Ascending aorta (tissue), 2 donors: ENCODE measurements at regions of chr5 and their contacts with region 1.

Region 1: DNA sequence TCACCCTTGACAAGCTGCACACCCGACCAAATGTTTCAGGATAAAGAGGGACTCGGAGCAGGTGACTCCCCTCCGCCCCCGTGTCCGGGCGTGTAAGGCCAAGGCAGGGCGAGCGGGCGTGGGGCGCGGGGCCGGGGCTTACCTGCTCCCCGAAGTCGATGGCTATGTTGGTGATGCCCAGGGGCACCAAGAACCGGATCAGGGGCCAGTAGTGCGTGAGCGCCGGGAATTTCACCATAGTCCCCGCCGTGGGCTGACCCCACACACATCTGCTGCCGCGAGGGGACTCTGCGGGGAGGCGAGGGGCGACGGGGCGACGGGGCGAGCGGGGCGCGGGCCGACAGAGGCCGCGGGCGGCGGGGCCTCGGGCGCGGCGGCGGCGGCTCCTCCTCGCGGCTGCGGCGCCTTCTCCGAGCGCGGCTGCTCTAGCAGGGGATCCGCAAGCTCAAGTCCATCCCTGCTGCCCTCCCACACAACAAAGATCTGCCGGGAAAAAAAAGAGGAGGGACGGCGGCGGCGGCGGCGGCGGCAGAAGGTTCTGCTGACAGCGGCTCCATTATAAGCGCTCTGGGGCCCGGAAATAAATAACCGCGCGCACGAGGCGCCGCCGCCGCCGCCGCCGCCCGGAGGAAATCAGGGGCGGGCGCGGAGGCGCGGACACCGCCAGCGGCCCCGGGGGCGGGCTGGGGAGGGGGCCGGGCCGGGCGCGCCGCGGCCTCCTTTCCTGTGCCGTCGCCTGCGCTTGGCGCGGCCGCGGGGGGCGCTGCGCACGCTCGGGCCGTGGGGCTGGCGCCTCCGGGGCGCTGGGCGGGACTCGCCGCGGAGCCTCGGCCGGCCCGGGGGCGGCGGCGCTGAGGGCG is at the start of gene ANKH:
- DNase-seq: peak in 1 of 2 donors; percentile 92
- H3K4me3 ChIP-seq: peak within 1 kb of the TSS; percentile 80 to 98
- H3K27ac ChIP-seq: peak within 1 kb of the TSS; percentile 94 to 100
- H3K4me1 ChIP-seq: no peaks in the 10 kb centered on the region
- H3K27me3 ChIP-seq: no peaks in the 10 kb centered on the region
- CTCF ChIP-seq: peak in 2 of 3 experiments; percentile 2 to 35
- total RNA-seq, gene ANKH: 388 TPM

Region 2: DNA sequence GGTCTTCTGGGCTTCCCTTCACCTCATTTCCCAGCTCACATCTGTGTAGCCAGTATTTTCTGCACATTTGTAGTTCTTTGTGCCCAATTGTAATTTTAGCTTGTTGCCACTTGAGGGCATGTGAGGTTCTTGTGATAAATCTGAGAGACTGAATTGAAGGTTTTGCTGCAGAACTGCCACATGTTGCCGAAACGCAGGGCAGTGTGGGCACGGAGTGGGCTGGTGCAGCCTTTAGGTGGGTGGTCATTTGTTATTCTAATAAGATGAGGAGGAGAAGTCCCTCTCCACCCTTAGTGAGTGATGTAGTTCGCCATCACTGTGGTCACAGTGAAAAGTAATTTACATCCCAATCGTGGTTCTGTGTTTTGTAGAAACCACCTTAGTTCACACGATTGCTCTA is 185.7 kb before region 1 on chr5:
- intact Hi-C with region 1: loop called (anchors 5 kb)
- DNase-seq: no peak
- H3K4me3 ChIP-seq: no peak overlapping the region
- H3K27ac ChIP-seq: no peak overlapping the region
- H3K4me1 ChIP-seq: peaks cover 0 to 28% of the 10 kb centered on the region in 2 donors
- H3K27me3 ChIP-seq: no peaks in the 10 kb centered on the region
- CTCF ChIP-seq: peak; percentile 69 to 79 (median 72)

Region 3: DNA sequence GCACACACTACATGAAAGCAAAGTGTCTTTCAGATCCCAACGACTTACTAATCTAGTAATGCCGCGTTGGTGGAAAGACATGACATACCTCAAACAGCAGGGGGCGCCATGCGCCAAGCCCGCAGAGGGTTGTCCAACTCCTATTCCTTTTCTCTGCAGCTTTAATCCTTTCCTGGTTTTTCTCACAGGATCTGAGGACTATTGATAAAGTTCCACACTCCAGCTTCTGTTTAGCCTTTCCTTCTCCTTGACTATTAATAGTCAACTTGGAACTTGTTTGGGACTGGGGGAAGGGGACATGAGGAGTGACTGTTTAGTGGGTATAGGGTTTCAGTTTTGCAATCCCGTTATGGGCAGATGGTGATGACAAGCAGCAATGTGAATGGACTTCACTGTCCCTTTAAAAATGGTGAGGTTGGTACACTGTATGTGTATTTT is 144.0 kb before region 1 on chr5:
- intact Hi-C with region 1: loop called (anchors 1 kb)
- DNase-seq: peak in 1 of 2 donors; percentile 88
- H3K4me3 ChIP-seq: no peak overlapping the region
- H3K27ac ChIP-seq: peak overlapping the region in 1 of 2 donors; percentile 58
- H3K4me1 ChIP-seq: peaks cover 2 to 16% of the 10 kb centered on the region in 2 donors
- H3K27me3 ChIP-seq: no peaks in the 10 kb centered on the region
- CTCF ChIP-seq: peak; percentile 91 to 93 (median 92)

Region 4: GRCh38 chr5:14743601-14744295 is 127.7 kb before region 1 on chr5:
- intact Hi-C with region 1: loop called (anchors 5 kb)
- DNase-seq: no peak
- H3K4me3 ChIP-seq: no peak overlapping the region
- H3K27ac ChIP-seq: peak overlapping the region; percentile 67 to 77
- H3K4me1 ChIP-seq: peaks cover 11 to 38% of the 10 kb centered on the region in 2 donors
- H3K27me3 ChIP-seq: no peaks in the 10 kb centered on the region
- CTCF ChIP-seq: no peak

Region 5: DNA sequence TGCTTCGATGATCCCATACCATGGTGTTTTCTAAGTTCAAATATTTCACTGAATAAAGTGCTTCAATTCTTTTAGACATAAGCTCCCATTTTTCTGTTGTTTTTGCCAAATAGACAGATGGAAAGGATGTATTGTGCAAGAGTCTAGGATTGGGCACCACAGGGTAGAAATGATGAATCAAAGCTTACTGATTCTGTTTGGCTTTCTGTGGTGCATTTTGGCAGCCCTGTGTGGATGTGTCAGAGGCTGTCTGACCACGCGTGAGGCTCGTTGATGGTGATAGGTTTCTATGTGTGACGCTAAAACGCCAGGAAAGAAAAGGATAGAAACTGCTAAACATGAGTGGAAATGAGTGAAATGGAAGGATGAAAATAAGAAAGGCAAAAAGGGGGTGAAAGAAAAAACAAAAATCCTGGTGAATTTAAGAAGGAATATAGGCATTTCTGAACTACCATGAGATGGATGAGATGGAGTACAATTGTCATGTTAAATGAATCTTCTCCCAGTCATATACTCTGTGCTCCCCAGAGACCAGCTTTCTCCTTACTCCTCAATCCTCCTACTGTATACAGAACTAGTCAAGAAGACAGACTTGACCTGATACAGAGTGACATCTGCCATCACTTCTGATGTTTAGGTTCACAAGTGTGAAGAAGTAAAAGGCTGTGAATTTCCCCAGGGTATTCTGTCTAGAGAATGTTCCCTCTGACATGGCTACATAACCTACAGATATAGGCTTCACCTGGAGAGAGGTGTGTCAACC is 54.3 kb before region 1 on chr5:
- intact Hi-C with region 1: loop called (anchors 2 kb)
- DNase-seq: peak; percentile 31 to 88
- H3K4me3 ChIP-seq: peak overlapping the region in 1 of 2 donors; percentile 13
- H3K27ac ChIP-seq: peak overlapping the region; percentile 61 to 66
- H3K4me1 ChIP-seq: peaks cover 0 to 40% of the 10 kb centered on the region in 2 donors
- H3K27me3 ChIP-seq: no peaks in the 10 kb centered on the region
- CTCF ChIP-seq: no peak